Right cardiac atrium (tissue), 5 donors: ENCODE measurements at regions of chrX and their contacts with region 1.

Region 1: GRCh38 chrX:82765811-82766210 is 742.3 kb upstream of the POU3F4 start:
- DNase-seq: no peak
- ATAC-seq: no peak
- H3K4me3 ChIP-seq: no peak overlapping the region
- H3K27ac ChIP-seq: no peak overlapping the region
- H3K4me1 ChIP-seq: no peaks in the 10 kb centered on the region
- H3K27me3 ChIP-seq: no peaks in the 10 kb centered on the region

Region 2: DNA sequence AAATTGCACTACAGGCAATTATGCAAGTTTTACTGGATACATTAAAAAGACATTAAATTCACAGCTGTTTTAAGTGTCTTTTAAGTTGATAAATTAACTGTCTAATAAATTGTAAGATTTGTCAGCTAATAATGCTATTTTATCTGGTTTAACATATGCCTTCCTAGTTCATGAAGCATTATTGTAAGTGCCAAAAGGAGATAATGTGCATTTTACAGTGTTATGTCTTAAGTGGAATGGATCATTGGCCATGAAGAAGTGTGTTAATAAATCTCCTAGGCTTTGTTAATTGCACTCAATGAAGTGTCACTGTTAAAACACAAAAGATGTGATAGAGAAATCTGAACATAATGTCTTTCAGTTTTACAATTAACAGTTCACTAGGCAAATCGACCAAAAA is 42.0 kb before region 1 on chrX:
- intact Hi-C with region 1: no loop called
- DNase-seq: no peak
- ATAC-seq: no peak
- H3K4me3 ChIP-seq: no peak overlapping the region
- H3K27ac ChIP-seq: no peak overlapping the region
- H3K4me1 ChIP-seq: no peaks in the 10 kb centered on the region
- H3K27me3 ChIP-seq: no peaks in the 10 kb centered on the region

Region 3: GRCh38 chrX:82816572-82816971 is 50.8 kb after region 1 on chrX:
- intact Hi-C with region 1: loop called in 1 of 4 experiments (anchors 10 kb)
- DNase-seq: no peak
- ATAC-seq: no peak
- H3K4me3 ChIP-seq: no peak overlapping the region
- H3K27ac ChIP-seq: no peak overlapping the region
- H3K4me1 ChIP-seq: no peaks in the 10 kb centered on the region
- H3K27me3 ChIP-seq: no peaks in the 10 kb centered on the region